ENCODE measurements at regions of chr4 and their contacts with region 1.

Region 1: GRCh38 chr4:56424697-56425514 is 10.5 kb downstream of the PPAT start:
- DNase-seq: no peak
- H3K4me3 ChIP-seq: no peak overlapping the region
- H3K27ac ChIP-seq: no peak overlapping the region
- H3K27me3 ChIP-seq: no peaks in the 10 kb centered on the region
- CTCF ChIP-seq: peak; percentile 68

Region 2: DNA sequence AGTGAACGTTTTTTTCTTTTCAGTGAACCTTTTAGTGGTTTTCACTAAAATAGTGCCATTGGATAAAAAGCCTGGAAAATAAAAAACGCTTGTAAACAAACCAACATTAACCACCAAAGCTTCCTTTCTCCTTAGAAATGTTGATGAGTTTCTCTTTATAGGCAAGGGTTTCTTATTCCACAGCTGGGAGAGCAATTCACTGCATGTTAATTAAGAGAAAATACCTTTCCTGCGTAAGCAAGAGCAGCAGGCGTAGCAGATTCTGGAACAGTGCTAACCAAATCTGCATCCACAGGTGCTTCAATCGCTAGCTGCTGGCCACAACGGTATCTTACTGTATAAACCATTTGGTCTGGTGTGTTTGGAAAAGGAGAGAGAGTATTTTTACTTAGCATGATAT is 24.3 kb before region 1 on chr4:
- CTCF ChIA-PET with region 1: interaction called, 14 read pairs
- POLR2A ChIA-PET with region 1: no interaction called
- DNase-seq: no peak
- H3K4me3 ChIP-seq: no peak overlapping the region
- H3K27ac ChIP-seq: no peak overlapping the region
- H3K27me3 ChIP-seq: no peaks in the 10 kb centered on the region
- CTCF ChIP-seq: no peak

Region 3: GRCh38 chr4:56410235-56411062 is 14.5 kb before region 1 on chr4:
- CTCF ChIA-PET with region 1: interaction called, 18 read pairs
- POLR2A ChIA-PET with region 1: no interaction called
- DNase-seq: peak; percentile 88
- H3K4me3 ChIP-seq: peak overlapping the region; percentile 38
- H3K27ac ChIP-seq: peak overlapping the region; percentile 34
- H3K27me3 ChIP-seq: no peaks in the 10 kb centered on the region
- CTCF ChIP-seq: no peak

Region 4: GRCh38 chr4:56435306-56435926 is 10.5 kb after region 1 on chr4 and contains the start of gene PPAT:
- CTCF ChIA-PET with region 1: interaction called, 70 read pairs
- POLR2A ChIA-PET with region 1: interaction called, 6 read pairs
- DNase-seq: peak; percentile 90
- H3K4me3 ChIP-seq: peak within 1 kb of the TSS; percentile 86
- H3K27ac ChIP-seq: peak within 1 kb of the TSS; percentile 87
- H3K27me3 ChIP-seq: no peaks in the 10 kb centered on the region
- CTCF ChIP-seq: peak; percentile 27; the same call in 1 of the 2 replicates
- polyA plus RNA-seq, gene PPAT: 9.8 and 11.6 TPM in 2 replicates

Region 5: GRCh38 chr4:56544573-56545131 is 119.7 kb after region 1 on chr4:
- CTCF ChIA-PET with region 1: interaction called, 18 read pairs
- POLR2A ChIA-PET with region 1: no interaction called
- DNase-seq: peak; percentile 63
- H3K4me3 ChIP-seq: peak overlapping the region; percentile 58
- H3K27ac ChIP-seq: no peak overlapping the region
- H3K27me3 ChIP-seq: peaks cover 7% of the 10 kb centered on the region
- CTCF ChIP-seq: peak; percentile 96

Region 6: DNA sequence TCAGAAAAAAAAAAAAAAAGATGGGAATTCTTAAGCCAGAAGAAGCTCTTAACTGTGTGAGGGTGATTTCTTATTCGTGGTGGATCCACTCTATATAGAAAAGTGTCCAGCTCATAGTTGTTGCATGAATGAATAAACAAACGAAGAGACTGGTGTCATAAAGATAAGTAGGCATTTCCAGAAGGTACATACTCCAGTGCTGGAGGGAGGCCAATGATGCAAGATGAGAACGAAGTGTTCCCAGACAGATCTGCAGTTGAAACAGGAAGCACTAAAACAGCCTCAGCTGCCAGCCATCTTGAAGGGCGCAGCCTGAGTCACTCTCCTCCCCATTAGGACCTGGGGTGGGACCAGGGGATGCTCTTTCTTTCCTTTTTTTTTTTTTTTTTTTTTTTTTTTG is 303.6 kb after region 1 on chr4:
- CTCF ChIA-PET with region 1: no interaction called
- POLR2A ChIA-PET with region 1: no interaction called
- DNase-seq: peak; percentile 63
- H3K4me3 ChIP-seq: no peak overlapping the region
- H3K27ac ChIP-seq: no peak overlapping the region
- H3K27me3 ChIP-seq: peaks cover 5% of the 10 kb centered on the region
- CTCF ChIP-seq: no peak

Measured in AG04450 (cell line).